A549 (cell line): ENCODE measurements at regions of chr4 and their contacts with region 1.

Region 1: DNA sequence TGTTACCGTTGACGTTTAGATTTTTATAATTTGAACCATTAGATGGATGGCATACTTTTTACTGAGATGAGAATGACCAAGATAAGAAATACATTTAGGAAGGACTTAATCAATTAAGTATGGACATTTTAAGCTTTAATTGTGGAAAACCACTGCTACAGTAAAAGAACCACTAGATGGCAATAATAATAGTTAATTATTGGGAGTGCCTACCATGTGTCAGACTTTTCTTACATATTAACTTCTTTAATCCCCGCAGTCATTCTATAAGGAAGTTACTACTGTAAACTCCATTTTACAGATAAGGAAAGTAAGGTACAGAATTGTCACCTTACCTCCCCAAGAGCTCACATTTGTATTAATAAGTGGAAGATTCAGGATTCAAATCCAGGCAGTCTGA is 48.5 kb upstream of the MYOZ2 start:
- DNase-seq: peak in 1 of 2 experiments; percentile 31
- ATAC-seq: peak; percentile 47 to 79; a peak in 3 of 6 replicates
- H3K4me3 ChIP-seq: no peak overlapping the region
- H3K27ac ChIP-seq: peak overlapping the region; percentile 52 to 85
- H3K4me1 ChIP-seq: peaks cover 30% of the 10 kb centered on the region
- CTCF ChIP-seq: peak; percentile 41
- EP300 ChIP-seq: no peak
- POLR2A ChIP-seq: no peak
- RAD21 ChIP-seq: peak; percentile 44 to 49; a peak in 4 of 5 replicates

Region 2: GRCh38 chr4:119103263-119103662 is 16.1 kb after region 1 on chr4:
- CTCF ChIA-PET with region 1: interaction called, 10 read pairs
- POLR2A ChIA-PET with region 1: interaction called, 7 read pairs
- DNase-seq: peak; percentile 69 to 96
- ATAC-seq: peak; percentile 97 to 99
- H3K4me3 ChIP-seq: no peak overlapping the region
- H3K27ac ChIP-seq: peak overlapping the region; percentile 91 to 99
- H3K4me1 ChIP-seq: peaks cover 64% of the 10 kb centered on the region
- CTCF ChIP-seq: no peak
- EP300 ChIP-seq: peak; percentile 66 to 85; a peak in 4 of 5 replicates
- POLR2A ChIP-seq: no peak
- RAD21 ChIP-seq: no peak